ENCODE measurements at regions of chr3 and their contacts with region 1.

Region 1: DNA sequence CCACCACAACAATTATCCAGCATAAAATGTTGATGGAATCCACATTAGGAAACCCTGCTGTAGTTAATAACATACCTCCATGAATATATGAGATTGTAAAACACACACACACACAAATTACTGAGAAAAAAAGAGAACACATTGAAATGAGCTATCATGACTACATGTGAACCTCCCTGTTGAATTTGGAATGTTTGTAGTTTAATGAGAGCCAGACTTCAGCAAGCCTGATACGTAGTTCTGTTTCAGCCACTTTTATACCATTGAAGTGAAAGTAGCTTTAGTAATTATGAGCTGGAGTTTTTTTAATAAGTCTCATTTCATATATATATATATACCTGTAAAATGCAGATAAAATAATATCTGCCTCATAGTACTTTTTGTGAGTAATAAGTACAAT is 1146.4 kb downstream of the NAALADL2 start:
- DNase-seq: no peak
- ATAC-seq: no peak
- H3K4me3 ChIP-seq: no peak overlapping the region
- H3K4me3 Mint-ChIP-seq: no peak overlapping the region
- H3K27ac ChIP-seq: no peak overlapping the region
- H3K27ac Mint-ChIP-seq: no peak overlapping the region
- H3K4me1 ChIP-seq: no peaks in the 10 kb centered on the region
- H3K4me1 Mint-ChIP-seq: no peaks in the 10 kb centered on the region
- H3K27me3 ChIP-seq: no peaks in the 10 kb centered on the region
- H3K27me3 Mint-ChIP-seq: no peaks in the 10 kb centered on the region

Region 2: DNA sequence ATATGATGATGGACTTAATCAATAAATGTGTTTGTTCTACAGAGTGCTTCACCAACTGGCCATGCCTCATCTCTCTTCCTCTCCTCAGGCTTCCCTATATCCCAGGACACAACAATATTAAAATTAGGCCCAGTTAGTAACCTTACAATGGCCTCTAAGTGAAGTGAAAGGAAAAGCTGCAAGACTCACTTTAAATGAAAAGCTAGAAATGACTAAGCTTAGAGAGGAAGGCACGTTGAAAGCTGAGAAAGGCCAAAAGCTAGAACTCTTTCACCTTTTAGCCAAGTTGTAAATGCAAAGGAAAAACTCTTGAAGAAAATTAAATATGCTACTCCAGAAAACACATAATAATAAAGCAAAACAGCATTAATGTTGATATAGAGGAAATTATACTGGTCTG is 136.2 kb before region 1 on chr3:
- CTCF ChIA-PET with region 1: no interaction called
- POLR2A ChIA-PET with region 1: interaction called in 1 of 2 experiments, 13 read pairs
- DNase-seq: no peak
- ATAC-seq: no peak
- H3K4me3 ChIP-seq: no peak overlapping the region
- H3K4me3 Mint-ChIP-seq: no peak overlapping the region
- H3K27ac ChIP-seq: no peak overlapping the region
- H3K27ac Mint-ChIP-seq: no peak overlapping the region
- H3K4me1 ChIP-seq: no peaks in the 10 kb centered on the region
- H3K4me1 Mint-ChIP-seq: no peaks in the 10 kb centered on the region
- H3K27me3 ChIP-seq: no peaks in the 10 kb centered on the region
- H3K27me3 Mint-ChIP-seq: no peaks in the 10 kb centered on the region

Measured in T-cell (primary cell).